ENCODE measurements at regions of chr3 and their contacts with region 1.

Region 1: DNA sequence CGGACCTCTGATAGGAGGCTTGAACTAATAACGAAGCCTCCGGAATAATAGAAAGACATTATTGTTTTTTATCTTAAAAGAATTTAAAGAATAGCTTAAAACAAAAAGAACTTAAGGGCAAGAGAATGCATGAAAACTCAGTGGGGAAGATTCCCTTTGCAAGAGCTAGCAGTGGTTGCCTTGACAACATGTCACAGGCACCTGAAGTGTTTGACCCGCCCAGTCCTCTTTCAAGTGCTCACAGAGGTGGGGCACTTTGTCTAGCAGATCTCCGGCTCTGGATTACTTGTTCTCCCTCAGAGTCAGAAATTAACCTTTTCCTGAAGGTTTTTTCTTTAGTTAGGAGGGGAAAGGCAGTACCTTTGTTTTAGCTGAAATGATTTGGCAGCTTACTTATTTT is 37.8 kb downstream of the LARS2 start:
- DNase-seq: no peak
- H3K4me3 ChIP-seq: no peak overlapping the region
- H3K27ac ChIP-seq: no peak overlapping the region
- H3K4me1 ChIP-seq: no peaks in the 10 kb centered on the region
- H3K27me3 ChIP-seq: no peaks in the 10 kb centered on the region
- CTCF ChIP-seq: no peak
- POLR2A ChIP-seq: no peak

Region 2: DNA sequence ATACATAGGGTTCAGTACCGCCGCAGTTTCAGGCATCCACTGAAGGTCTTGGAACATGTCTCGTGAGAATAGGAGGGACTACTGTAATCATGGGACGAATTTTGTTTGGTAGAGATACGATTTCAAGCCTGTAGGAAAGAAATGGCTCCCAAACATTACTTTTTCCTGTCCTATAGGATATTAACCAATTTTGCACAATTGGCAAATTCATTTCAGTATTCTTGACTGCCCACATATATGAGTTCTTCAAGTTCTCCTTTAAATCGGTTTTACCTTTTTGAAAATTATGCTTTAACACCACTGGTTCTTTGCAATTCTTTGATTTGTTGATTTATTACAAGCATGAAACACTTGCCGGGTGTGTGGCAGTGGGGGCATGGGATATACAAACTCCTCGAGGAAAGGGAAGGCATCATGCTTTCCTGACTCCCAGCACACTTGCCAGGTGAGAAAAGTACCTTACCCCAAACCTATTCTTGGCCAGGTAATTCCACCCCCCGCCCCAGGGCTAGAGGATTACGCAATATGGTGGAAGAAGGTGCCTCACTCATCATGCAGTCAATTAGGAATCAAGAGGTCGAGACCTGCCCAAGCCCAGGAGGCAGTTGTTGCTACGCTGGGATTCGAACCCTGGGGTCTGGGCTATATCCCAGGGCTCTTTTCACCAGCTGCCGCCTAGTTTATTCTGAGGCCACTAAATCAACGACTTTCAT is 38.4 kb before region 1 on chr3:
- intact Hi-C with region 1: loop called (anchors 2 kb)
- DNase-seq: peak in 1 of 2 donors; percentile 24
- H3K4me3 ChIP-seq: peak overlapping the region; percentile 69 to 93 (median 91)
- H3K27ac ChIP-seq: peak overlapping the region in 1 of 2 donors; percentile 67
- H3K4me1 ChIP-seq: peaks cover 0 to 4% of the 10 kb centered on the region in 2 donors
- H3K27me3 ChIP-seq: no peaks in the 10 kb centered on the region
- CTCF ChIP-seq: no peak
- POLR2A ChIP-seq: no peak

Region 3: DNA sequence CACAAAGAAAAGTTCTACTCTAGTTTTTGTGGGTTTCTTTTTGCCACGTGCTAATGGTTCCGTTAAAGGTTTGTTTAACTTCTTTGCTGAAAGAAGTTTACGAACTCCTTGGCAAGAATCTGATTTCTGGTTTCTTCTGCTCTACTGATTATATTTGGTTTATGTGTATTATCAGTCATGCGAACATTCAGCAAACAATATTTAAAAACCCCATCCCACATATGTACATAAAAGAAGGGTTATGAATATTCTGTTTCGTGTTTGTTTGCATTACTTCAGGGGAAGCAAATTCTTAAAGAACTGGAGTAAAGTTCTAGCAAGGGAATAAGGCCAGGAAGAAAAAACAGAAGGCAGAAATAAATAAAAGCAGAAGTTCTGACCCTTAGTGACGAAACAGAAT is 28.0 kb before region 1 on chr3:
- intact Hi-C with region 1: no loop called
- DNase-seq: no peak
- H3K4me3 ChIP-seq: no peak overlapping the region
- H3K27ac ChIP-seq: no peak overlapping the region
- H3K4me1 ChIP-seq: no peaks in the 10 kb centered on the region
- H3K27me3 ChIP-seq: no peaks in the 10 kb centered on the region
- CTCF ChIP-seq: no peak
- POLR2A ChIP-seq: no peak